ENCODE measurements at regions of chr1 and their contacts with region 1.

Region 1: GRCh38 chr1:102434421-102434820 is 437.7 kb upstream of the OLFM3 start:
- DNase-seq: peak; percentile 4
- H3K4me3 ChIP-seq: no peak overlapping the region
- H3K27ac ChIP-seq: no peak overlapping the region
- H3K4me1 ChIP-seq: no peaks in the 10 kb centered on the region
- H3K27me3 ChIP-seq: no peaks in the 10 kb centered on the region
- CTCF ChIP-seq: peak; percentile 40 to 50

Region 2: DNA sequence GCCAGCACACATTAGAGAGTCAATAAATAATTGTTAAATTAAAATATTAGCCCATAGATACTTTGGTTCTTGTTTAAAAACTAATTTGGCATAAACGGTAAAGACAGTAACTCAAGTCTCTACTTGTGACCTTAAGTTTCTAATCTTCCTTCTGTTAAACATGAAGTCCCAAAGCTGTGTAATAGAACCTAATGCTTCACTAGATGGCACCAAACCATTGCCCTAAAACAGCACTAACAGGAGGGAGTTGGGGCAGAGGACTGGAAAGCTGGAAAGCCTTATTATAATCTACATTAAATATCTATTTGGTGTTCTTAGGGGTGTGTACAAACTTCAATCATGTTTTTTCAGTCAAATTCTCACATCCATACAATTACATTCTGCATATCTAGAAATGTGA is 614.4 kb before region 1 on chr1:
- CTCF ChIA-PET with region 1: no interaction called
- dilution Hi-C with region 1: no loop called
- in situ Hi-C with region 1: no loop called
- intact Hi-C with region 1: loop called (anchors 1 kb)
- DNase-seq: peak; percentile 30
- H3K4me3 ChIP-seq: no peak overlapping the region
- H3K27ac ChIP-seq: no peak overlapping the region
- H3K4me1 ChIP-seq: no peaks in the 10 kb centered on the region
- H3K27me3 ChIP-seq: peaks cover 6% of the 10 kb centered on the region
- CTCF ChIP-seq: peak; percentile 29 to 67

Measured in mammary epithelial cell (primary cell).